GM10248 (cell line): ENCODE measurements at regions of chr5 and their contacts with region 1.

Region 1: GRCh38 chr5:140145818-140146522 is 20.2 kb downstream of the IGIP start:
- DNase-seq: peak; percentile 76
- CTCF ChIP-seq: peak; percentile 64

Region 2: DNA sequence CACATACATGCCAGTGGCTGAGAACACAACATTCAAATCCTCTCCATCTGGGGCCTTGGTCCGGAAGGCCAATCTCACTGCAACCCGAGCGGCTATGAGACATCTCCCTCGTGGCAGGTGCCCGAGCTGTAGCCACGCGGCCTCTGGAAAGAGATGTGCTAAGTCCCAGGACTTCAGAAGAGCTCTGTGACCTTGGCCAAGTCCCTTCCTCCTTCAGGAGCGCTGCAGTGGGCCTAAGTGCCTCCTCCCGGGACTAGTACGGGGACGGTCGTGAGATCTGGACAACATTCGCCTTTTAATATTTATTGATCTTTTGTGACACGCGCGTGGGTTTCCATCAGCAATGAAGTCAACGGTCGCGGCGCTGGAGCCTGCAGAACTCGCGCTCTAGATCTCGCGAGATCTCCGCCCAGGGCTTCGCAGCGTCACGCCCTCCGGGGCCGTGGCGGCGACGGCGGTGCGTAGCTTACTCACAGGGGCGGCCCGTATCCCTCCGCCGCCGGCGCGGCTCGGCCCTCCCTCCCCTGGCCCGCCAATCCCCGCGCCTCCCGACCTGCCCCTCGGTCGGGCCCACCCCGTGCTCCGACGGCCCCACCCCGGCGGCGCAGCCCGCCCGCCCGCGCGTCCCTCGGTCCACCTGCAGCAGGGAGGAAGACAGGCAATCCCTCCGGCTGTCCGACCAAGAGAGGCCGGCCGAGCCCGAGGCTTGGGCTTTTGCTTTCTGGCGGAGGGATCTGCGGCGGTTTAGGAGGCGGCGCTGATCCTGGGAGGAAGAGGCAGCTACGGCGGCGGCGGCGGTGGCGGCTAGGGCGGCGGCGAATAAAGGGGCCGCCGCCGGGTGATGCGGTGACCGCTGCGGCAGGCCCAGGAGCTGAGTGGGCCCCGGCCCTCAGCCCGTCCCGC is 585.0 kb before region 1 on chr5 and contains the start of gene UBE2D2:
- CTCF ChIA-PET with region 1: no interaction called
- POLR2A ChIA-PET with region 1: no interaction called
- DNase-seq: peak; percentile 96
- CTCF ChIP-seq: no peak

Region 3: DNA sequence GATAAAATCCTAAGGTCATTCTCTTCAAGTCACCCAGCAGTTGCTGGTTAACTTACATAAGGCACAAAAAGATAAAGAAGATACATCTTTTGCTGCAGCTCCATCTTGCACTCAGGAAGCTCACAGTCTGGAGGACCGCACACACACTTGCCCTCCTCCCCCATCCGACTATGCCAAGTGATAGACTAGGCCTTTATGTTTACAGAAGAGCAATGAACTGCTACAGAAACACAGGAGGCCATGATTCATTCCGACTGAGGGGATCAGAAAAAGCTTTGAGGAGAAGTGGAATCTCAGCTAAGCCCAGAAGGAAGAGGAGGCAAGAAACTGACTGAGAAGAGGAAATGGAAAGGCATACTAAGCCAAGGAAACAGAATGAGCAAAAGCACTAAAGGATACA is 120.2 kb before region 1 on chr5:
- CTCF ChIA-PET with region 1: interaction called, 10 read pairs
- POLR2A ChIA-PET with region 1: no interaction called
- DNase-seq: no peak
- CTCF ChIP-seq: no peak

Region 4: GRCh38 chr5:140060816-140061215 is 85.2 kb before region 1 on chr5:
- CTCF ChIA-PET with region 1: interaction called, 25 read pairs
- POLR2A ChIA-PET with region 1: no interaction called
- DNase-seq: no peak
- CTCF ChIP-seq: no peak

Region 5: GRCh38 chr5:140084541-140084940 is 61.4 kb before region 1 on chr5:
- CTCF ChIA-PET with region 1: interaction called, 27 read pairs
- POLR2A ChIA-PET with region 1: no interaction called
- DNase-seq: no peak
- CTCF ChIP-seq: no peak

Region 6: GRCh38 chr5:140131967-140132409 is 14.0 kb before region 1 on chr5:
- CTCF ChIA-PET with region 1: interaction called, 114 read pairs
- POLR2A ChIA-PET with region 1: interaction called, 7 read pairs
- DNase-seq: no peak
- CTCF ChIP-seq: no peak

Region 7: DNA sequence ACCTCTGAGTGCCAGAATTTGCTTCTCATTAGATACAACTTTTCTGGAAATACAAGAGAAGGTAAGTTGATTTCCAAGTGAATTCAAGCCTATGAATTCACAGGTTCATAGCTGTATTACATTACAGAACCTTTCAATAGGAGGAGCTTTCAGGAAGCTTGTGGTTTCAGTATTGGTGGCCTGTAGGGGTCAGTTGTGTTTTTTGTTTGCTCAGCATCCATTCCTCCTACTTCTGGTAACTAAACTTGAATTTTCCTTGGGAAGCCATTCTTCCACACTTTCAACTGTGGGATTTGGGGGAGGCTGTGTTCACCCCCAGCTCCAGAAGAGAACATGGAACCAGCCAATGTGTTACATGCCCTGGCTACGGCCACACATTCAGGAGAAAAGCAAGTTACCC is 23.4 kb after region 1 on chr5:
- CTCF ChIA-PET with region 1: interaction called, 16 read pairs
- POLR2A ChIA-PET with region 1: no interaction called
- DNase-seq: no peak
- CTCF ChIP-seq: peak; percentile 9